Left ventricle myocardium superior (tissue), 1 donor: ENCODE measurements at regions of chr11 and their contacts with region 1.

Region 1: DNA sequence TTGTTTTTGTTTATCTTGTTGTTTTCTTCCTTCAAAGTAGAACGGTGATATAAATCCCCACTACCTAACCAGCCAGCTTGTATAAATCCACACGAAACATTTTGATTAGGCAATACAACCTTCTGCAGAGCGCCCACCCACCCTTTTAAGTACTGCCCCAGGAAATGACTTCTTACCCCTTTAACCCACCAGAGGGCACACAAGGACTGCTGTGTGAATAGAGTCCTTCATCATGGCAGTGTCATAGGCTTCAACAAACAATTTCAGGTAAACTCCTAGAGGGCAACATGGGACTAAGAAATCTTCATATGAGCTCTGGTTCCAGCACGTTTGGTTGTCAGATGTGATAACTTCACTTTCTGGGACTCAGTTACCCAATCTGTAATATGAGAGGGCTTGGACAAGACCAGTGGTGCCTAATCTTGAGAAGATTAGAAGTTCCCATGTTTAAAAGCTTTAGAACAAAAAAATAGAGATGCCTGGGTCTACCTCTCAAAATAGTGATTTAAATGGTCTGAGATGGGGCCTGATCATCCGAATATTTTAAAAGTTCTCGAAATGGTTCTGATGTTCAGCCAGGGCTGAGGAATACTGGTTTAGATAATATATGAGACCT is 56.1 kb downstream of the PIWIL4 start:
- DNase-seq: no peak
- ATAC-seq: peak; percentile 94

Region 2: DNA sequence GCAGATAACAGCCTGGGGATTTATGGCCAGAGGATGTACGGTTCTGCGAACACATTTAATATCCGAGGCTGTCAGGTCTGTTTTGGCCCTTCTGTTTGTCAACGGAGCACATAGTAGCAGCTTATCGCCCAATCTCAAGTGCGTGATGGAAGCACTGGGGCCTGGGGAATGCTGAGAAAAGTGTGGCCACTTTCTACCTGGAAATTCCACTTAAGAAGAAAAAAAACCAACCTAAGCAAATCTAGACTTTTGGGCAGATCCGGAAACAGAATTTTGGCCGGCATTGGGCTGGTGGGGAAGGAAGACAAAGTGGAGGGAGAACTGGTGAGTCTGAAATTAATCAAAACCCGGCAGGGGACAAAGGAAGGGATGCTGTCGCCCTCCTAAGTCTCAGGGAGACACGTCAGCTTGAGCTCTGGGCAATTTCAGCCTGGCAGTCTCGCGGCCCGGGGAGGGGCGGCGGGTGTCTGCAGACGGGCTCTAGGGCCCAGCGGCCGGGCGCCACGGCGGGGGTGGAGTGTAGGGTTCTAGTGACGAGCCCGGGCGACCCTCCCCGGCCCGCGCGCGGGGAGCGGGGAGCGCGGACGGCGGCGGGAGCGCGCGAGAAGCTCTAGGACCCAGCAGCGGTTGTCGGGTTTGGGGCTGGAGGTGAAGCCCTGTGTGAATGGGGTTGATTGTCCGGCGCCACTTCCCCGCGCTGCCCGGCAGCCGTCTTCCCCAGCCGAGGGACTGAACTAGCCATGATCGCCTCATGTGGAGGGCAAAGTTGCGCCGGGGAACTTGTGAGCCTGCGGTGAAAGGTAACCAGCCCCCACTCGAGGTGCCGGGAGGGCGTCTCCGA is 144.8 kb after region 1 on chr11 and contains the start of gene AMOTL1:
- intact Hi-C with region 1: loop called (anchors 10 kb)
- DNase-seq: peak; percentile 93
- ATAC-seq: peak; percentile 95
- total RNA-seq, gene AMOTL1: 46.3 TPM

Region 3: DNA sequence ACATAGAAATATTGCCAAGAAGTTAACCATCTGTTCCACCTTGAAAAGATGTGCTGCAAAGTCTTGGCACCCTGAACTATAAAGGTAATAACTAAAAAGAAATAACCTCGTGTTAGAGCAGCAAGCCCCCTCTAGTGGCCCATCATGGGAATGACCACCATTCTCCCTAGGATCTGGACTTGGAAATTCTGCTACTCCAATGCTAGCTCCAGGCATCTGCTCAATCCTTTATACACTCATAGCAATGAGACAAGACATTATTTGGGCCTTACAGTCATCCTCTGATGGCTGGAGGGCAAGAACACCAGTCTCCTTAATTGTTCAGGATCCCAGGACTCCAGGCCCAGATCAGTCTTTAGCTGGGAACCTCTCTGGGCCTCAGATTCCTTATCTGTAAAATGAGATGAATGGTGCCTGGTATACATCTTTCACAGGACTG is 274.1 kb after region 1 on chr11:
- intact Hi-C with region 1: loop called (anchors 5 kb)
- DNase-seq: peak; percentile 58
- ATAC-seq: peak; percentile 54